ENCODE measurements at regions of chr11 and their contacts with region 1.

Region 1: GRCh38 chr11:47213985-47214564 is 699 bp upstream of the DDB2 start:
- DNase-seq: peak; percentile 85 to 91
- H3K4me3 ChIP-seq: peak overlapping the region; percentile 70
- H3K27ac ChIP-seq: peak overlapping the region; percentile 49
- H3K4me1 ChIP-seq: peaks cover 29% of the 10 kb centered on the region
- H3K27me3 ChIP-seq: no peaks in the 10 kb centered on the region
- CTCF ChIP-seq: no peak

Region 2: DNA sequence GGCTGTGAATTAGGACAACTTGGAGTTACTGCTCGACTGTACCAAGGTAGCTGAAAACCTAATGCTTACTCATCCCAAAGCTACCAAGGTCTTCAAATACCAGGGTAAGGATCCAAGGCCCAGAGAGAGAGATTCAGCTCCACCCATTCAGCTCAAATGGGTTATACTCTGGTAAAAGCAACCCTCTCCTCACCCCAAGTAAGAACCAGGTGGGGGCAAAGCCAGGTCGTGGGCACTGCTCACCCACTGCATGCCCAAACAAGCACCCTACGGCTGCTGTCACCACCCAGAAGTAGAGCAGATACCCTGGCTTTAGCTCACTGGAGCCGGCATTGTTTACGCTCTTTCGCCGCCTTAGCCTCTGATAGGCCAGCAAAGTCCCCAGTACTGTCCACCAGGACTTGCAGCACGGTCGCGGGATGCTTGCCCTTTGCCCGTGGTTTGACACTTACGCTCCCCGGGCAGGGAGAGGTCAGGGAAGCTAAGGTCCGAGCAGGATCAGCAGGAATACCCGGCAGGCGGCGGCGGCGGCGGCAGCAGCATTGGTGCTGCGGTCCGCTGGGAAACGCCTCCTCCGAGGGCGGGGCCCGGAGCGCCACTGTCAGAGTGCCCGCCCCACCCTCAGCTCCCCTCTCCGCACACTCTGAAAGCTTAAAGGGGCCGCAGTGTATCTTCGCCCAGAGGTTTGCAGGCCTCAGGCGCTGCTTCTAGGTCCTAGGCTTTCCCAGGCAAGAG is 387.6 kb before region 1 on chr11:
- CTCF ChIA-PET with region 1: no interaction called
- POLR2A ChIA-PET with region 1: interaction called, 11 read pairs
- intact Hi-C with region 1: no loop called
- DNase-seq: peak; percentile 61 to 85
- H3K4me3 ChIP-seq: peak overlapping the region; percentile 45
- H3K27ac ChIP-seq: no peak overlapping the region
- H3K4me1 ChIP-seq: no peaks in the 10 kb centered on the region
- H3K27me3 ChIP-seq: no peaks in the 10 kb centered on the region
- CTCF ChIP-seq: no peak

Region 3: DNA sequence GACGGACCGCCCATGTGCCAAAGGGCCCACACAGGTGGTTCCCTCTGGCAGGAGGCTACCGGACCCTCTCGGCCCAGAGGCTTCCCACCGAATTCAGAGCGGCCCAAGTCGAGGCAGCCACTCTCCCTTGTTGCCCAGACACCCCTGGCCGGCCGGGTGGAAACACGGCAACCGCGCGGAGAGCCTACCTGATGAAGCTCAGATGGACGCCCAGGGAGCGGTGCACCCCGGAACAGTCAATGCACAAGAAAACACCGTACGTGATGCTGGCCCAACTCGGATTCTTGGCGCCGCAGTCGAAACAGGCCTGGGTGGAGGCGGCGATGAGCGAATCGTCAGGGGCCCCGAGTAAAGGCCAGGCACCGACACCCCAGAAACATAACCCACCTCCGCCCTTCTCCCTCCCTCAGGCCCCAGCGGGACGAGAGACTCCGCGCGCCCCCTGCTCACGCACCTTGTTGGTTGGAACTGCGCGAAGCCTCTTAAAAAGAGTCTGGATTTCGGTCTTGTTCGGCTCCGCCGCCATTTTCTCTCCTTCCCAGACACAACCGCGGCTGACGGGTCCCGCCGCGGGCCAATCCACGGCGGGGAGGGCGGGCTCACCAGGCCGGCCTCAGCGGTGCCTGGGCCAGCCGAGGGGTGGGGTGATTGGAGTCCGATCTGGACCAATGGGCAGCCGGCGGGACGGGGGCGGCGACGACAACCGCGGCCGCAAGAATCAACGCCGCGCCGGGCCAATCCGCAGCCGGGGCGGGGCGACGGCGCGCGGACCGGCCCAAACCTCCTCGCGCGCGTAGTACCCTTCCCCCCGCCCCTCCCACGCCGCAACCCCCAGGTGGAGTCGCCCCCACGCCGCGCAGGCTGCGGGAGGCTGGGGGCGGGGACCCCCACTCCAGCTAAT is 37.5 kb before region 1 on chr11 and contains the start of gene ARFGAP2:
- CTCF ChIA-PET with region 1: interaction called, 8 read pairs
- POLR2A ChIA-PET with region 1: interaction called, 3 read pairs
- intact Hi-C with region 1: loop called (anchors 1 kb)
- DNase-seq: peak; percentile 85 to 97
- H3K4me3 ChIP-seq: peak within 1 kb of the TSS; percentile 95
- H3K27ac ChIP-seq: peak within 1 kb of the TSS; percentile 77
- H3K4me1 ChIP-seq: peaks cover 12% of the 10 kb centered on the region
- H3K27me3 ChIP-seq: no peaks in the 10 kb centered on the region
- CTCF ChIP-seq: no peak
- total RNA-seq, gene ARFGAP2: 122 and 130 TPM in 2 replicates

Region 4: DNA sequence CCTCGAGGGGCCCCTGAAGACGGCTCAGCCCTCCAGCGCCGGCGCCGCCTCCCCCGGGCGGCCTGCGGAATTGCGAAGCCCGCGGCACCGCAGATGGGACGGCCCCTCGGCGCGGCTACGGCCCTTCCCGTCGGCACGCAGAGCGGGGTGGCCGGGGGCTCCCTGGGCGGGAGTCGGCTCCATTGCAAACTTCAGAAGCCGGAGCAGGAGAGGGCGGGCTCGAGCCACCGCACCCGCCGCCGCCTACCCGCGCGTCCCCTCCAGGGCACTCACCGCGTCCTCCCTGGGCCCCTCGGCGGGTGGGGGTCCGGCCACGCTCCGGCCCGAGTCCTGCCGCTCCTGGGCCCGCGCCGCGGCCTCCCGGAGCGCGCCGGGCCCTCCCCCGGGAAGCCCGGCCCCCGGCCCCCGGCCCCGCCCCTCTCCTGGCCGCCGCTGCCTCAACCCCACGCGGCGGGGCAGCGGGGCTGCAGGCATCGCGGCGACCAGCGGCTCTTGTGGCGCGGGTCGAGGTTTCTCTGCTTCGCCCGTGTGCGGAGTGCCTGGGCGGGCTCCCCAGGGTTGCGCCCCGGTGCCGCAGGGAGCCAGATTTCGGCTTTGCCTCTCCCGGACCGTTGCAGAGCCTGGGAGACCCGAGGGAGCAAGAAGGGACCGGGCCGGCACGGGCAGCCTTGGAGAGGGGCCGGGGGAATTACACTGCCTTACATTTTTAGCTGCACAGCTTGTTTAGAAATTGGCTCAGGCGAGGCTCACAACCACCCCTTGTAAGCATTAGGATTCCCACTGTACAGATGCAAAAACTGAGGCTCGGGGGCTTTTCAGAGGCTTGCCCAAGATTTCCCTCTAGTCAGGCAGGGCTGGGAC is 27.8 kb before region 1 on chr11 and contains the start of gene PACSIN3:
- CTCF ChIA-PET with region 1: interaction called, 7 read pairs
- POLR2A ChIA-PET with region 1: interaction called, 69 read pairs
- intact Hi-C with region 1: loop called (anchors 1 kb)
- DNase-seq: peak in 1 of 2 experiments; percentile 64
- H3K4me3 ChIP-seq: peak within 1 kb of the TSS; percentile 77
- H3K27ac ChIP-seq: peak within 1 kb of the TSS; percentile 84
- H3K4me1 ChIP-seq: peaks cover 56% of the 10 kb centered on the region
- H3K27me3 ChIP-seq: no peaks in the 10 kb centered on the region
- CTCF ChIP-seq: no peak
- total RNA-seq, gene PACSIN3: 113 and 114 TPM in 2 replicates

Region 5: DNA sequence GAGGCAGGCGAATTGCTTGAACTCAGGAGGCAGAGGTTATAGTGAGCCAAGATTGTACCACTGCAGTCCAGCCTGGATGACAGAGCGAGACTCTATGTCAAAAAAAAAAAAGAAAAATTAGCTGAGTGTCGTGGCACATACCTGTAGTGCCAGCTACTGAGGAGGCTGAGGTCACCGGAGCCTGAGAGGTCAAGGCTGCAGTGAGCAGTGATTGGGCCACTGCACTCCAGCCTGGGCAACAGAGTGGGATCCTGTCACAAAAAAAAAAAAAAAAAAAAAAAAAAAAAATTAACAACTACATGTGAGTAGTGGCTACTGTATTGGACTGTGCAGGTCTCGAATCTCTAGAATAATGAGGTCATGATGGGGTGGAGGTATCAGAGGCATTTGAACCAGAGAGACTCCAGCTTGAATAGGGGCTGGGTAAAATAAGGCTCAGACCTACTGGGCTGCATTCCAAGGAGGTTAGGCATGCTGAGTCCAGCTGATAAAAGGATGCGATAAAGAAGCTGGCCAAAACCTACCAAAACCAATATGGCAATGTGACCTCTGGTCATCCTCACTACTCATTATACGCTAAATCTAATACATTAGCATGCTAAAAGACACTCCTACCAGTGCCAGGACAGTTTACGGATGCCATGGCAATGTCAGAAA is 22.1 kb before region 1 on chr11:
- CTCF ChIA-PET with region 1: no interaction called
- POLR2A ChIA-PET with region 1: interaction called, 36 read pairs
- intact Hi-C with region 1: loop called (anchors 1 kb)
- DNase-seq: peak; percentile 79 to 96
- H3K4me3 ChIP-seq: no peak overlapping the region
- H3K27ac ChIP-seq: peak overlapping the region; percentile 91
- H3K4me1 ChIP-seq: peaks cover 84% of the 10 kb centered on the region
- H3K27me3 ChIP-seq: no peaks in the 10 kb centered on the region
- CTCF ChIP-seq: no peak

Region 6: DNA sequence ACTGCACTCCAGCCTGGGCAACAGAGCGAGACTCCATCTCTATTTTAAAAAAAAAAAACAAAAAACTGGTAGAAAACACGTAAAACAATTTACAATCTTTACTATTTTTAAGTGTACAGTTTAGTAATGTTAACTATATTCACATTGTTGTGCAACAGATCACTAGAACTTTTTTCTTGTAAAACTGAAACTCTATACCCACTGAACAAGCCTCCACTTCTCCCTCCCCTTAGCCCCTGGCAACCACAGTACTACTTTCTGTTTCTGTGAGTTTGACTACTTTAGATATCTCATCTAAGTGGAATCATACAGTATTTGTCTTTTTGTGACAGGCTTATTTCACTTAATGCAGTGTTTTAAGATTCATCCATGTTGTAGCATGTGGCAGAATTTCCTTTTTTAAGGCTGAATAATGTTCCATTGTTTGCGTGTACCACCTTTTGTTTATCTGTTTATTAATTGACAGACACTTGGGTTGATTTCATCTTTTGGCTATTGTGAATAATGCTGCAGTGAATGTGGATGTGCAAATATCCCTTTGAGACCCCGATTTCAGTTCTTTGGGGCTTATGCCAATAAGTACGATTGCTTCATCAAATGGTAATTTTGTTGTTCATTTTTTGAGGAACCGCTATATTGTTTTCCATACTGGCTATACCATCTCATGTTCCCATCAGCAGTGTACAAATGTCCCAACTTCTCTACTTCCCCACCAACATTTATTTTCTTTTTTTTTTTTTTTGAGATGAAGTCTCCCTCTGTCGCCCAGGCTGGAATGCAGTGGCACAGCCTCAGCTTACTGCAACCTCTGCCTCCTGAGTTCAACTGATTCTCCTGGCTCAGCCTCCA is 11.7 kb after region 1 on chr11:
- CTCF ChIA-PET with region 1: no interaction called
- POLR2A ChIA-PET with region 1: interaction called, 10 read pairs
- intact Hi-C with region 1: no loop called
- DNase-seq: no peak
- H3K4me3 ChIP-seq: no peak overlapping the region
- H3K27ac ChIP-seq: no peak overlapping the region
- H3K4me1 ChIP-seq: peaks cover 4% of the 10 kb centered on the region
- H3K27me3 ChIP-seq: no peaks in the 10 kb centered on the region
- CTCF ChIP-seq: no peak

Region 7: DNA sequence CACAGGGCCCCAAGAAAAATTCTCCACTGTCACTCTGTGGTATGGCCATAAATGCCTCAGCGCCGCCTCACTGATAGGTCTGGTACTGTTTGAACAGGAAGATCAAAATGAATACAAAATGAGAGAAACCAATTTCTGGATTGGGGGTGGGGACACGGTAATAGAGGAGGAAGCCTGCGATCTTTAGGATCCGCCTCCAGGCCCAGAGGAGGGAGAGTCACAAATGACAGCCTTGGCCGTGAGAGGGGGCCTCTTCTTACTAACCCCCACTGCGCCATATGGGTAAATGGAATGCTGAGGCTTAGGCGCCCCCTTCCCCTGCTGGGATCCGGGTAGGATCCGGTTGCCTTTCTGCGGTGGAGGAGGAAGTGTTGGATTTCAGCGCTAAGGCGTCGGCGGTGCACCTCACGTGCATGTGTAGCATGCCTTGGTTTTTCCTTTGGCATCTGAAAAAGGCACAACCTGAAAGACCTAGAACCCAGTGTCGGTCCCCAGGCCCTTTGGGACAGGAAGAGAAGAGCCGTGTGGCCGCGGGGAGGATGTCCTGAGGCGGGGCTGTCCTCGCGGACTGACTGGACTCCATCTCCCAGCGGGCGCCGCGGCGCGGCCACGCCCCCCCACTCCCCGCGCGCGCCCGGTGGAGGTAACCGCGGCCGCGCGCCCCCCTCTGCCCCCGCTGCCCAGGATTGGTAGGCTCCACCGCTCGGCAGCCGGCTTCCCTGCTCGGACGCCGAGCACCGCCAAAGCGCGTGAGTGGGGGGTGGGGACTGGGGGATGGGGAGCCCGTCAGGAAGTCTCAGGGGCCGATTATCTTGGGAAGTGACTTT is 55.1 kb after region 1 on chr11:
- CTCF ChIA-PET with region 1: no interaction called
- POLR2A ChIA-PET with region 1: no interaction called
- intact Hi-C with region 1: loop called (anchors 2 kb)
- DNase-seq: peak; percentile 83 to 89
- H3K4me3 ChIP-seq: peak overlapping the region; percentile 72
- H3K27ac ChIP-seq: peak overlapping the region; percentile 69
- H3K4me1 ChIP-seq: peaks cover 50% of the 10 kb centered on the region
- H3K27me3 ChIP-seq: no peaks in the 10 kb centered on the region
- CTCF ChIP-seq: peak; percentile 46

Measured in PC-9 (cell line).